Aorta (tissue), 5 donors: ENCODE measurements at regions of chr7 and their contacts with region 1.

Region 1: GRCh38 chr7:104848138-104848990 is 165.6 kb upstream of the KMT2E start:
- DNase-seq: no peak
- ATAC-seq: peak; percentile 72
- H3K4me3 ChIP-seq: no peak overlapping the region
- H3K27ac ChIP-seq: no peak overlapping the region
- H3K4me1 ChIP-seq: no peaks in the 10 kb centered on the region
- H3K27me3 ChIP-seq: no peaks in the 10 kb centered on the region

Region 2: GRCh38 chr7:104231054-104232046 is 617.0 kb before region 1 on chr7:
- intact Hi-C with region 1: loop called (anchors 5 to 10 kb)
- DNase-seq: peak; percentile 43 to 74
- ATAC-seq: peak; percentile 86
- H3K4me3 ChIP-seq: no peak overlapping the region
- H3K27ac ChIP-seq: no peak overlapping the region
- H3K4me1 ChIP-seq: no peaks in the 10 kb centered on the region
- H3K27me3 ChIP-seq: no peaks in the 10 kb centered on the region